ENCODE measurements at regions of chr12 and their contacts with region 1.

Region 1: DNA sequence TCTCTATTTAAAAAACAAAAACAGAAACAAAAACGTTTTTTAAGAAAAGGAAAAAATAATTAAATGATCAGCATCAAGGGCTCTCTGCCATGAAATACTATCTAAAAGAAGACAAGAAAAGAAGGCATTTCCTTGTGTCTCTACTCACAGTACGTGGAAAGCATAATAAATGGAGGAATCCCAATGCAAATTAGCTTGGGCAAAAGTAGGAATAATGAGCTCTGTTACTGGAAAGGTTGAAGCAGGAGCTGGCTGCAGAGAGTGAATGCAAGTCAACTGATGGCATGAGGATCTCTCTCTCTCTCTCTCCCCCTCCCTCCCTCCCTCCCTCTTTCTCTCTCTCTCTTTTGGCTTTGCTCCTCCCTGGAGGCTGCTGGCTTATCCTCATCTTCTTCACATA is 85.9 kb downstream of the TBX3 start:
- DNase-seq: no peak
- H3K4me3 ChIP-seq: no peak overlapping the region
- H3K27ac ChIP-seq: no peak overlapping the region
- H3K4me1 ChIP-seq: no peaks in the 10 kb centered on the region
- H3K27me3 ChIP-seq: no peaks in the 10 kb centered on the region
- CTCF ChIP-seq: no peak
- POLR2A ChIP-seq: no peak

Region 2: GRCh38 chr12:113912760-113913329 is 685.3 kb before region 1 on chr12:
- intact Hi-C with region 1: loop called (anchors 5 kb)
- DNase-seq: peak; percentile 57 to 69
- H3K4me3 ChIP-seq: no peak overlapping the region
- H3K27ac ChIP-seq: no peak overlapping the region
- H3K4me1 ChIP-seq: no peaks in the 10 kb centered on the region
- H3K27me3 ChIP-seq: no peaks in the 10 kb centered on the region
- CTCF ChIP-seq: peak; percentile 35 to 90 (median 84)
- POLR2A ChIP-seq: no peak